Activated CD4-positive, alpha-beta memory T cell treated with anti-CD3 and anti-CD28 coated beads, Interleukin-2, amount 10 ng/mL, durations not matched to agents 7 days and 5 days (primary cell): ENCODE measurements at regions of chr15 and their contacts with region 1.

Region 1: GRCh38 chr15:63048115-63048775 is 5.7 kb downstream of the TPM1 start:
- DNase-seq: peak; percentile 83
- H3K4me3 Mint-ChIP-seq: peak overlapping the region; percentile 80
- H3K27ac Mint-ChIP-seq: no peak overlapping the region
- H3K4me1 Mint-ChIP-seq: peaks cover 16% of the 10 kb centered on the region
- H3K27me3 Mint-ChIP-seq: peaks cover 44% of the 10 kb centered on the region

Region 2: DNA sequence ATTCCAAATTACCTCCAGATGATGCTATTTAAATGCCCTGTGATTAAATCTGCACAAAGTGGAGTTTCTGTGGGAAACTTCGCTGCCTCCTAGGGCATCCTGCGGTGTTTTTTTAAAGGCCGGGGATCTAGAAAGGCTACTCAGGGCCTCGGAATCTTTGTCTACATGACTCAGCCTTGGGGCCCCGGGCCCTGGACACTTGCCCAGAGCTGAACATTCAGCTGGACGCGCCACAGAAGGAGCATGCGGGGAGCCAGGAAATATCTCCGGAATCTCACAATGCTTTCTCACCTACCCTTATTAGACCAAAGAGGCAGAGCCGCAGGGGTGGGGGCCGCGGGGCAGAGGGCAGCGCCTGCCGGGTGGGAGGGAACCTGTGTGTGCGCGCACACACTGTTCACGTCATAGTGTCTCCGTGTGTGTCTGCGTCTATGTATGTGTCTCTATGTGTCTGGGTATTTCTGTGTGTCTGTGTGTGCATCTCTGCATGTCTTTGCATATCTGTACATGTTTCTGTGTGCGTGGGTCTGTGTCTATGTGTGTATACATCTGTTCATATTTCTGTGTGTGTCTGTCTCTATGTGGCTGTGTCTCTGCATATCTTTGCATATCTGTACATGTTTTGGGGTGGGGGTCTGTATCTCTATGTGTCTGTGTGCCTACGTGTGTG is 151.1 kb before region 1 on chr15:
- CTCF ChIA-PET with region 1: no interaction called
- POLR2A ChIA-PET with region 1: no interaction called
- DNase-seq: no peak
- H3K4me3 Mint-ChIP-seq: no peak overlapping the region
- H3K27ac Mint-ChIP-seq: no peak overlapping the region
- H3K4me1 Mint-ChIP-seq: no peaks in the 10 kb centered on the region
- H3K27me3 Mint-ChIP-seq: peaks cover 1% of the 10 kb centered on the region

Region 3: DNA sequence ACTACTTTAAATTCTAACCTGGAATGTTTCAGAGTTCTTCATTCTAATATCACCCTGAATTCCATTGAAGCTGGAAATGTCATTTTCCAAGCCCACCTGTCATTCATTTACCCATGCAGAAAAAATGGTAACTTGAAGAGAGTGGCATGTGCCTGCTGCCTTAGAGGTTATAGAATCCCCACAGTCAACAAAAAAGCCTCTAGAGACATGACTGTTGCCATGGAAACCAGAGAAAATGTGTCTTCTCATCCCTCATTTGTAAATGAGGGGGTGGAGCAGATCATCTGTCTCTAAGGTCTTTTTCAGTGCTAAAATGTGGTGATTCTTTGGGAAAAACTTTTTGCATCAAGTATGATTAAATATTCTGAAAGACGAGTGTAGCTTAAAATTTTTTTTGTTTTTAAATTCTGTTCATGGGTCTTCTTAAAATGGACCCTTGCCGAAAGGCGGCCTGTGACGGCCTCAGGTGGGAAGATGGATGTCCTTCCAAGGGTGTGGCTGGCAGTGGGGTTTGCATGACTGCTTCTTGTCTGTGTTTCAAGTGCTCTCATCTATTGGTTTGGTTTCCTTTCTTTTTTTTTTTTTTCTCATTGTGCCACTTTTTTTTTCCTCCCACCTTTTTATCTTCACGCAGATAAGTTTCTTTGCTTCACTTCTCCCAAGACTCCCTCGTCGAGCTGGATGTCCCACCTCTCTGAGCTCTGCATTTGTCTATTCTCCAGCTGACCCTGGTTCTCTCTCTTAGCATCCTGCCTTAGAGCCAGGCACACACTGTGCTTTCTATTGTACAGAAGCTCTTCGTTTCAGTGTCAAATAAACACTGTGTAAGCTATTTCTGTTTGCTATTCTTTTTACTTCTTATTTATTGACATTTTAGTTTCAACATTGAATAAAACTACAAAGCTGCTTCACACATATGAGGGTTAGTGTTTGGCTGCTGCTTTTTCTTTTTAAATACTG is 17.3 kb after region 1 on chr15:
- CTCF ChIA-PET with region 1: interaction called, 21 read pairs
- POLR2A ChIA-PET with region 1: no interaction called
- DNase-seq: no peak
- H3K4me3 Mint-ChIP-seq: no peak overlapping the region
- H3K27ac Mint-ChIP-seq: no peak overlapping the region
- H3K4me1 Mint-ChIP-seq: peaks cover 5% of the 10 kb centered on the region
- H3K27me3 Mint-ChIP-seq: no peaks in the 10 kb centered on the region

Region 4: DNA sequence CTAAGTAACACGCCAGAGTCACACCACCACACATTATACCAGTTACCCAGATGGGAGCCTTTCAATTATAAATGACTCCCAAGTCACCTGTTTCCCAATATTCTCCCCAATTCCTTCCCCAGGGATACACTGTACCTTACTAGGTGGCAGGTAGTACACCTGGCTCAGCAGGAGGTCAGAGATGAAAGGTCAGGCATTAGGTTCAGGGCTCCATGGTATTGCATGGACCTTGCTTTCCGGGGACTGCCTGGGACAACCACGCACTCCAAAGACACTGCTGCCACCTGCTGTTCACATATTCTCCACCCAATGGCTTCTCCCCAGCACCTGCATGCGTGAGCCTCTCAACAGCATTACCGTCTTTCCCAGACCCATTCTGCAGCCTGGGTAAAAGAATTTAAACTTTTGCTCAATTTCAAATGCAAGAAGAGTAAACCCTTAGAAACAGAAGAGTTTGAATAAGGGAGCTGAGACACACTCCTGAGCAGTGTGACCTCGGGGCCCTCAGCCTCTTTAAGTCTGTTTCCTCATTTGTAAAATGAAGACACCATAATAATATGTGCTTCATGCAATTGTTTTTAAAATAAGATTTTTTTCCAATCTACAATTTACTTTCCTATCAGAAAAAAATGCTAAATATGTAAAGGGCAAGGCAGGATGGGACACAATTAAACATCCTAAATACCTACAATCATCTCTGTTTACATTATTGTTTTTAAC is 45.4 kb after region 1 on chr15:
- CTCF ChIA-PET with region 1: interaction called, 75 read pairs
- POLR2A ChIA-PET with region 1: interaction called, 6 read pairs
- DNase-seq: peak; percentile 77
- H3K4me3 Mint-ChIP-seq: no peak overlapping the region
- H3K27ac Mint-ChIP-seq: no peak overlapping the region
- H3K4me1 Mint-ChIP-seq: peaks cover 11% of the 10 kb centered on the region
- H3K27me3 Mint-ChIP-seq: peaks cover 3% of the 10 kb centered on the region

Region 5: DNA sequence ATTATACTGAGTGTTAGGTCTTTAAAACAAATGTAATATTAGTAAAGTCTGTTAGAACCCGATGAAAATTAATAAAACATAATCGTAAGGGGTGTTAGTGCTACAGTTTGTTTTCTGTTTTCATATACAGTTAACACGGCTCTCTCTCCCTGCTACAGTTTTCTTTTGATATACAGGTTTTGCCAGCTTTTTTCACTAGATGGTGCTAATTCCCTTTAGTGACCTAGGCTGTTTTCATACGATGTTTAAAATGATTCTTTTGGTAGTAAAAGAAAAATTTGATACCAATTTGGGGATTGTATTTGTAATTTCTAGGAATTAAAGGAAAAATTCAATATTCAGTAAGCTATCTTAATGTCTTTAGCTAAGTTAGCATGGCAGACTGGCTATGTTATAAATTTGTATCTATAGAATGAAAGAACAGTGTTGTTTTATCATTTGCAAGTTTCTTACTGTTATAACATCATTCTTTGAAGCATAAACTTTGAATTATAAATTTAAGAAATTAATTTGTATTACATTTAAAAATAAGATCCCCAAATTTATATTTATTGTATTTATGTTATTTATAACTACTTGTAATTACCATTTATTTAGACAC is 240.6 kb after region 1 on chr15:
- CTCF ChIA-PET with region 1: interaction called, 10 read pairs
- POLR2A ChIA-PET with region 1: no interaction called
- DNase-seq: no peak
- H3K4me3 Mint-ChIP-seq: no peak overlapping the region
- H3K27ac Mint-ChIP-seq: no peak overlapping the region
- H3K4me1 Mint-ChIP-seq: peaks cover 5% of the 10 kb centered on the region
- H3K27me3 Mint-ChIP-seq: no peaks in the 10 kb centered on the region